HAP-1 (cell line): ENCODE measurements at regions of chr4 and their contacts with region 1.

Region 1: GRCh38 chr4:118280501-118281218 is 72.1 kb downstream of the PRSS12 start:
- DNase-seq: peak; percentile 78 to 87
- H3K4me3 ChIP-seq: peak overlapping the region; percentile 95
- H3K4me1 ChIP-seq: peaks cover 35% of the 10 kb centered on the region
- H3K27me3 ChIP-seq: no peaks in the 10 kb centered on the region

Region 2: DNA sequence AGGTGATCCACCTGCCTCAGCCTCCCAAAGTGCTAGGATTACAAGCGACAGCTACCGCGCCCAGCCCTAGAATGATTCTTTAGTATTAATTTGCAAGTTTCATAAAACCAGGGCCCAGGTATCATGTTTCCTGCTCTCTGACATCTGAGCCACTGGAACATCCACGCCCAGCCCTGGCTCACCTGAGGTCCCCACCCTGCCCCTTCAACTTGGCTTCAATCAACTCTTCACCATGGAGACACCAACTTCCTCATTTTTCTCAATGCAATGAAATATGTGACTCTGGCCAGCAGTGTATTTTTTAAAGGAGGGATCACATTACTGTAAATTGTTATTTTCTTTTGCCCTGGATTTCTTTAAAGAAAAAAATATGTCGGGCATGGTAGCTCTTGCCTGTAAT is 68.2 kb after region 1 on chr4:
- in situ Hi-C with region 1: loop called (anchors 10 kb)
- DNase-seq: no peak
- H3K4me3 ChIP-seq: no peak overlapping the region
- H3K4me1 ChIP-seq: peaks cover 67% of the 10 kb centered on the region
- H3K27me3 ChIP-seq: no peaks in the 10 kb centered on the region

Region 3: DNA sequence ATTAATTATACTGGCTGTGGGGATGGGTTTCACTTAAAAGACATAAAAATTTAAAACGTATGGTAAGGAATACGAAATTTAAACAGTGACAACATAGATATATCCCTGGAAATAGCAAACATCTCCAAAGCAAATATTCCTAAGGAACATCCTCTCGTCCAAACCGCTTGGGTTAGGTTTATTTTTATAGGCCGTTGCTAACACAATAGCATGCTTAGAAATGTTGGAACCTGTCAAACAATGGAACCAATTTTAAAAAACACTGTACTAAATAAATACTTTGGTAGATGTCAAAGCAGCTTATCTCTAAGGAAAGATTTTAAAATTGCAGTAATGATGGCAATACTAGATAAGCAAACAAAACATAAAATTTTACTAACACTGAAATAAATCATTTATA is 509.9 kb after region 1 on chr4:
- in situ Hi-C with region 1: no loop called
- DNase-seq: peak in 1 of 2 experiments; percentile 46
- H3K4me3 ChIP-seq: no peak overlapping the region
- H3K4me1 ChIP-seq: peaks cover 12% of the 10 kb centered on the region
- H3K27me3 ChIP-seq: no peaks in the 10 kb centered on the region

Region 4: DNA sequence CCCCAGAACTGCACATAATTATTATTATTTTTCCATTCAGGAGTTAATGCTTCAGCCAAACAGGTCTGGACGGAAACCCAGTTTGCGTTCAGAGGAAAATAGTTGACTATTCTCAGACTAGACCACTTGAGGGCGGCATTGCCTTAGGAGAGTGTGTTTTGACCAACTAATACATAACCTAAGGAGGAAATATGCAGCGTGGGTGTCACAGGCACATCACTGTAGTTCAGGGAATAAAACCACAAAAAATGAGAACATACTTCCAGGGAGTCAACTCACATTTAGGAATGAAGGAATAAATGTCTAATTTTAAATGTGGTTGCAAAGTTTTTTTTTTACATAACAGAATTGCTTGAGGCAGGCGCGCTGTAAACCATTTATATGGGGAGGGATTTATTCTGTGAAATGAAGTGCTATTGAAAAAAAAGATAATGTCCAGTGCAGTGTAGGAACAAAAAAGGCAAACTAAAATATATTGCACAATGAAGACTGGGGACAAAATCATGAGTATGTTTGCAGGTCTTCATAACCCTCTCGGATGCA is 701.2 kb after region 1 on chr4:
- in situ Hi-C with region 1: no loop called
- DNase-seq: peak; percentile 75 to 78
- H3K4me3 ChIP-seq: no peak overlapping the region
- H3K4me1 ChIP-seq: no peaks in the 10 kb centered on the region
- H3K27me3 ChIP-seq: no peaks in the 10 kb centered on the region